Caco-2 (cell line): ENCODE measurements at regions of chr7 and their contacts with region 1.

Region 1: DNA sequence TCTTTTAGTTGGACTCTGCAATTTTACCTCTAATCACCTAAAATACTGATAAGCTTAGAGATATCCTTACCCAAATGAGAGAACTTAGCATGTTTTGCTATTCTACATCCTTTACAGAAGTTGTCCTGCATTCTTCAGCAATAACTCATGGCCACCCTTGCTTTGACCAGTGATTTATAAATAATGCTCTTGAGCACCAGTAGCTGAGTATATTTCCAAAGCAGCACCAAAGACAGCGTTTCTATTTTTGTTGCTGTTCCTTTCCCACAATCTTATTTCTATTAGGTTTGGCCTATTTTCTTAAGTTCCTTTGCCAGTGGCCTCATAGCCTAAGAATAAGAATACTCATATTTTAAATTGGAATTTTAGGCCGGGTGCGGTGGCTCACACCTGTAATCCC is 15.0 kb downstream of the ARPC1A start:
- DNase-seq: no peak
- H3K4me3 ChIP-seq: no peak overlapping the region
- H3K4me3 Mint-ChIP-seq: no peak overlapping the region
- H3K27ac Mint-ChIP-seq: no peak overlapping the region
- H3K4me1 ChIP-seq: no peaks in the 10 kb centered on the region
- H3K4me1 Mint-ChIP-seq: no peaks in the 10 kb centered on the region
- H3K27me3 ChIP-seq: no peaks in the 10 kb centered on the region
- H3K27me3 Mint-ChIP-seq: no peaks in the 10 kb centered on the region
- CTCF ChIP-seq: no peak

Region 2: DNA sequence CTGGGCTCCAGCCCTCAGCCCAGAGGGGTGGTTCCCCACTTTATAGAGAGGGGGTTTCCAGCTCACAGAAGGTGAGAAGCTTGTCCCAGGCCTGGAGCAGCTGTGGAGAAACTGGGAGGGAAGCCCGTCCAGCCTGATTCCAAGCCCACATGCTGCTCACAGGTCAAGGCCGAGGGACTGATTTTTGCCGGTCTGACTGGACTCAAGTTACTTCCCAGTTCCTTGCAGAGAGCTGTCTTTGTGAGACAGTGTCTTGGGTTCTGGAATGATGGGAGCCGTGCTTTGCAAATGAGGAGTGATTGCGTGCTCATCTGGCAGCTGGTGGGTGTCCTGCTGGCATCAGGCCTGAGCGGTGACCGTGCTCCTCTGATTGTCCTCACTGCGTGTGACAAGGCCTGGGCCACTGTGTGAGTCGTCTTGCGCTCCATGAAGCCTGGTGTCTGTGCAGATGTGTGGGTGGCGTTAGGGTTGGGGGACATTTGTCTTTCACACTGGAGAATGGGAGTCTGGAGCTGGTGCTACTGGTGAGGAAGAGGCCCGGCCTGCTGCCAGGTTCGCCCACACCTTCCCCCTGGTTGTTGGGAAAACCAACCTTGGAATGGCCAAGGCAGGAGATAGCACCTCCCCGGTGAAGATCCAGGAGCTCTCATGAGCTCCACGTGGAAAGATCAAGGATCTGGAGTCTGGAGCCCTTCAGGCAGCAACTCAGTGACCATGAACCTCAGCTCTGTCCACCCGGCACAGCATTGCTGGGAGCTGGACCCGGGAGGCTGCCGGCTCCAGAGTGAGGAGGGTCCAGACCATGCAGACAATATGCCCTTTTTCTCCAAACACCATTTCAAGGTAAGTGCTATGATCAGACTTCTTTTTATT is 326.3 kb before region 1 on chr7:
- CTCF ChIA-PET with region 1: no interaction called
- POLR2A ChIA-PET with region 1: interaction called, 17 read pairs
- intact Hi-C with region 1: no loop called
- DNase-seq: no peak
- H3K4me3 ChIP-seq: no peak overlapping the region
- H3K4me3 Mint-ChIP-seq: no peak overlapping the region
- H3K27ac Mint-ChIP-seq: no peak overlapping the region
- H3K4me1 ChIP-seq: no peaks in the 10 kb centered on the region
- H3K4me1 Mint-ChIP-seq: no peaks in the 10 kb centered on the region
- H3K27me3 ChIP-seq: no peaks in the 10 kb centered on the region
- H3K27me3 Mint-ChIP-seq: no peaks in the 10 kb centered on the region
- CTCF ChIP-seq: no peak

Region 3: GRCh38 chr7:99143853-99144672 is 196.6 kb before region 1 on chr7 and contains the start of gene SMURF1:
- CTCF ChIA-PET with region 1: no interaction called
- POLR2A ChIA-PET with region 1: no interaction called
- intact Hi-C with region 1: no loop called
- DNase-seq: peak; percentile 55 to 80
- H3K4me3 ChIP-seq: peak within 1 kb of the TSS; percentile 83
- H3K4me3 Mint-ChIP-seq: peak within 1 kb of the TSS; percentile 83
- H3K27ac Mint-ChIP-seq: peak within 1 kb of the TSS; percentile 78
- H3K4me1 ChIP-seq: peaks cover 7% of the 10 kb centered on the region
- H3K4me1 Mint-ChIP-seq: peaks cover 16% of the 10 kb centered on the region
- H3K27me3 ChIP-seq: no peaks in the 10 kb centered on the region
- H3K27me3 Mint-ChIP-seq: no peaks in the 10 kb centered on the region
- CTCF ChIP-seq: no peak
- total RNA-seq, gene SMURF1: 22.5 and 23.0 TPM in 2 replicates

Region 4: DNA sequence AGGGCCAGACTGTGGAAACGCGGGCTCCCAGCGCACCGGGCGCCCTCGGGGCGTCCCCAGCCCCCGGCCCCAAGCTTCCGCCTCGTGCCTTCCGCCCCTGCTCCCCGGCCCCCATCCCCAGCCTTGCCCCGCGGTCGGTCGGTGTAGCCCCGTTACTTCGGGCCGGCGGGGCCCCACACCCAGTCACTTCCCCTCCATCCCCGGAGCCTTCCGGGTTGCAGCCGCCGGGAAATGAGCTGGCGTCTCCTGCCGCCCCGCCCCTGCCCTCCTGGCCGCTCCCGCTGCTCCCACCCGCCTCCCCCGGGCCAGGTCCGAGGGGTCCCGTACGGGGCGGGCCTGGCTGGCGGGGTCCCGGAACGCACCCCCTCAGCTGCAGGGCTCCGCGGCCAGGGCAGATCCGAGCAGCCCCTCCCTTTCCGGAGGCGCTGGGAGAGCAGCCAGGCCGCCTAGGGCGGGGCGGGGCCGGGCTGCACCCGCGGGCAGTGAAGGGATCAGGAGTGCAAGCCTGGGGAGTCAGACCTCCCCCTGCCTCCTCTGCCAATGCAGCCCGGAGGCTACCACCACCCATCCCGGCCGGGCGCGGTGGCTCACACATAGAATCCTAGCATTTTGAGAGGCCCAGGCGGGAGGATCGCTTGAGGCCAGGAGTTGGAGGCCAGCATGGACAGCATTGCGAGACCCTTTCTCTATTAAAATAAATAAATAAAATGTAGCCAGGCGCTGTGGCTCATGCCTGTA is 34.6 kb after region 1 on chr7:
- CTCF ChIA-PET with region 1: no interaction called
- POLR2A ChIA-PET with region 1: interaction called, 13 read pairs
- intact Hi-C with region 1: no loop called
- DNase-seq: peak; percentile 75 to 79
- H3K4me3 ChIP-seq: peak overlapping the region; percentile 91
- H3K4me3 Mint-ChIP-seq: peak overlapping the region; percentile 77
- H3K27ac Mint-ChIP-seq: no peak overlapping the region
- H3K4me1 ChIP-seq: peaks cover 26% of the 10 kb centered on the region
- H3K4me1 Mint-ChIP-seq: peaks cover 15% of the 10 kb centered on the region
- H3K27me3 ChIP-seq: no peaks in the 10 kb centered on the region
- H3K27me3 Mint-ChIP-seq: no peaks in the 10 kb centered on the region
- CTCF ChIP-seq: no peak